Sigmoid colon (tissue), 7 donors: ENCODE measurements at regions of chr10 and their contacts with region 1.

Region 1: GRCh38 chr10:103244663-103245271 is 920 bp upstream of the RPEL1 start:
- DNase-seq: peak; percentile 88
- H3K4me3 ChIP-seq: no peak overlapping the region
- H3K27ac ChIP-seq: no peak overlapping the region
- H3K4me1 ChIP-seq: peaks cover 0 to 14% (median 11%) of the 10 kb centered on the region in 4 donors
- H3K27me3 ChIP-seq: no peaks in the 10 kb centered on the region
- CTCF ChIP-seq: peak; percentile 69 to 85 (median 78)
- EP300 ChIP-seq: no peak
- POLR2A ChIP-seq: no peak

Region 2: DNA sequence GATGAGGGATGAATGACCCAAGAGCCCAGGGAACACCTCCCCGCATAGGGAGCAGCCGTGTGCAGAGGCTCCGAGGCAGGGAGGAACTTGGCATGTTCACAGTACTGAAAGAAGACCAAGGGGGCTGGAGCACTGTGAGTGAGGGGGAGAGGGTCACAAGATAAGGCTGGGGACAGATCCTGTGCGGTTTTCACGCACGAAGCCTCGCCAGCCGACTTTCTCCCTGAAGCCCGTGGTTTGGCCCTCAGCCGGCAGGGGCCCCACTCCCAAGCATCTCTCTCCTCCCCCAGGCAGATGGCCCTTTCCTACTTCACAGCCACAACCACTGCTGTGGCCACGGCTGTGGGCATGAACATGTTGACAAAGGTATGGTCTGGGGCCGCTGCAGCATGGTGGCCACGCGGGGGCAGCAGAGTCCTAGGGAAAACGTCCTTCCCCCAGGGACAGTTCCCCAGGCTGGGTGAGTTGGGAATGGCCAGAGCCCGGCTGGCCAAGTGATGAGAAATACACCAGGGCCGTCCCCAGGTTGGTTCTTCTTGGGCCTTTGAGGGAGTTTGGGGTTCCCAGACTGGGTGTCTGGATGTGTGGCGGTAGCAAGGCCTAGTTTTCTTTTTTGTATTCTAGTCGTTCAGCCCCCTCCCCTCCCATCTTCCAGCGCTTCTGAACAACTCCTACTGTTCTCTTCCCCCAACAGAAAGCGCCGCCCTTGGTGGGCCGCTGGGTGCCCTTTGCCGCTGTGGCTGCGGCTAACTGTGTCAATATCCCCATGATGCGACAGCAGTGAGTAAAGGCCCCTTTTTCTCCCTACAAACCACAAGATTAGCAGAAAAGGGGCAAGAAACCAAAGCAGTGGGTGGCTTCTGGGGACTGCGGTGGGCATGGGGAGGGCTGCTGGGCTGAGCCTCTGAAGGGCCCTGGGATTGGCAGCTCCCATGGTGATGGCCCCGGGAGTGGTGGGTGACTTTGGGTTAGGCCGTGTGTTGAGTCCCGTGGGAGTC is 515.4 kb before region 1 on chr10:
- intact Hi-C with region 1: loop called (anchors 10 kb)
- DNase-seq: peak; percentile 94
- H3K4me3 ChIP-seq: no peak overlapping the region
- H3K27ac ChIP-seq: peak overlapping the region in 1 of 4 donors; percentile 2
- H3K4me1 ChIP-seq: peaks cover 0 to 11% (median 3%) of the 10 kb centered on the region in 4 donors
- H3K27me3 ChIP-seq: no peaks in the 10 kb centered on the region
- CTCF ChIP-seq: peak; percentile 89 to 92 (median 91)
- EP300 ChIP-seq: no peak
- POLR2A ChIP-seq: no peak

Region 3: DNA sequence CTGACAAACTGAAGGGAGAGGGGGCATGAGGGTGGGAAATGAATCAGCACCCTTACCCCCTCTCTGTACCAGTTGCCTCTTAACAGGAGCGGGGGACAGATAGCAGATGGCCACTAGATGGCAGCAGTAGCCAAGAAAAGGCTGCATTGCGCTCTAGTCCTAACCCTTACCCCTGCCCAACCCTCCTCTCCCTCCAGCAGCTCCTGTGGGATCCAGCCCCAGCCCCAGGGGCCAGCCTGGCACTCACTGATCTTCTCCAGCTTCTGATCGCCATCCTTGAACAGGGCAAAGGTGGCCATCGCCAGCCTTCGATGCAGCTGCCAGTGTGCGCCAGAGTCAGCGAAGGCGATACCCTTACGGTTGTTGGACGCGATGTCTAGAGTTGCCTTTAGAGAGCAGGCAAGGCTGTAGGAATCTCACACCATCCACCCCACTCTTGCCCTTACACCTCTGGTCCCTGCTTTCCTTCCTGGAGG is 409.7 kb before region 1 on chr10:
- intact Hi-C with region 1: loop called (anchors 10 kb)
- DNase-seq: peak; percentile 89
- H3K4me3 ChIP-seq: no peak overlapping the region
- H3K27ac ChIP-seq: no peak overlapping the region
- H3K4me1 ChIP-seq: peaks cover 0 to 8% (median 3%) of the 10 kb centered on the region in 4 donors
- H3K27me3 ChIP-seq: no peaks in the 10 kb centered on the region
- CTCF ChIP-seq: peak; percentile 66 to 89 (median 84)
- EP300 ChIP-seq: no peak
- POLR2A ChIP-seq: no peak

Region 4: DNA sequence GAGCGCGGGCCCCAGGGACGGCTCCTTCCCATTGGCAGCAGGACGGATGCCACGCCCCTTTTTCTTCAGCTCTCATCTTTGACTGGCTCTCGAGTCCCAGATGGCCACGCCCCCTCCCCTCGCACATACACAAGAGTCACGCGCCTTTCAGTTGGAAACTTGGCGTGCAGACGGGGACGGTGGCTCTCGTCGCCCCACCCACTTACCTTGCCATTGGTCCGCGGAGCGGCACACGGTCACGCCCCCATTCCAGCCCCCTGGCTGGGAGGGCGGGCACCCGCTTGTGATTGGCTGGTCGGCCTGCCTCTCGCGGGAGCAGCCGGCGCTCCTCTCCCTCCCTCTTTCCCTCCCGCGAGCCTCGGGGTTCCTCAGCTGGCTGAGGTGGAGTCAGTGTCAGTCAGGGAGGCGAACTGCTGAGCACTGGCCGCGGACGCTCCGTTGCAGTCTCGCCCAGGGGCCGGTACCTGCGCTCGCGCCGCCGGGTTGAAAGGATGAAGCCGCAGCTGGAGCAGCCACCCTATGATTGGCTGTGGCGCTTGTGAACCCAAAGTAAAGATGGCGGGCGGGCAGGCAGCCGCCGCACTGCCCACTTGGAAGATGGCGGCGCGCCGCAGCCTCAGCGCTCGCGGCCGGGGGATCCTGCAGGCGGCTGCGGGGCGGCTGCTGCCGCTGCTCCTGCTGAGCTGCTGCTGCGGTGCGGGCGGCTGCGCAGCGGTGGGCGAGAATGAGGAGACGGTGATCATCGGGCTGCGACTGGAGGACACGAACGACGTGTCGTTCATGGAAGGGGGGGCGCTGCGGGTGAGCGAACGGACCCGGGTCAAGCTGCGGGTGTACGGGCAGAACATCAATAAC is 326.6 kb before region 1 on chr10 and contains the start of gene CNNM2:
- intact Hi-C with region 1: loop called (anchors 1 kb)
- DNase-seq: peak; percentile 100
- H3K4me3 ChIP-seq: peak within 1 kb of the TSS; percentile 62 to 97 (median 80)
- H3K27ac ChIP-seq: peak within 1 kb of the TSS; percentile 82 to 95 (median 92)
- H3K4me1 ChIP-seq: peaks cover 0 to 46% (median 37%) of the 10 kb centered on the region in 4 donors
- H3K27me3 ChIP-seq: no peaks in the 10 kb centered on the region
- CTCF ChIP-seq: no peak
- EP300 ChIP-seq: no peak
- POLR2A ChIP-seq: peak in 1 of 2 donors; percentile 58
- total RNA-seq, gene CNNM2: 3.6 to 11.1 (median 6.0) TPM

Region 5: DNA sequence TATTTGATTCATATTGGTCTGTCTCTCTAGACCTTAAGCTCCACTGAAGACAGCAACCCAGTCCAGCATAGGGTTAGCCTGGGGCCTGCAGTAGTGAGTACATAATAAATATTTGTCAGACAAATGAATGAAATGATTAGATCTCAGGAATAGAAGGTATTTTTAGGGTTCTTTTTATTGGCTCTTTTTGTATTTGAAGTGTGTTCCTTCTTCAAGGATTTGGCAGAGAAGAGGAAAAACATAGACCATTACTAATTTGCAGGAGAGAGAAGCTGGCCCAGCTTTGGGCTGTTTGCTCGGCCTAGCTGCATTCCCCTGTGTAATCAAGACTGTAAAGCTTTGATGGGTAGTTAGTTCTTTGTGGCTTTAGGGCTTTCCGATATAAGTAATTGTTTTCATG is 262.5 kb before region 1 on chr10:
- intact Hi-C with region 1: no loop called
- DNase-seq: no peak
- H3K4me3 ChIP-seq: no peak overlapping the region
- H3K27ac ChIP-seq: no peak overlapping the region
- H3K4me1 ChIP-seq: no peaks in the 10 kb centered on the region
- H3K27me3 ChIP-seq: no peaks in the 10 kb centered on the region
- CTCF ChIP-seq: no peak
- EP300 ChIP-seq: no peak
- POLR2A ChIP-seq: no peak

Region 6: GRCh38 chr10:103013416-103013815 is 231.4 kb before region 1 on chr10:
- intact Hi-C with region 1: no loop called
- DNase-seq: no peak
- H3K4me3 ChIP-seq: no peak overlapping the region
- H3K27ac ChIP-seq: no peak overlapping the region
- H3K4me1 ChIP-seq: no peaks in the 10 kb centered on the region
- H3K27me3 ChIP-seq: no peaks in the 10 kb centered on the region
- CTCF ChIP-seq: no peak
- EP300 ChIP-seq: no peak
- POLR2A ChIP-seq: no peak

Region 7: DNA sequence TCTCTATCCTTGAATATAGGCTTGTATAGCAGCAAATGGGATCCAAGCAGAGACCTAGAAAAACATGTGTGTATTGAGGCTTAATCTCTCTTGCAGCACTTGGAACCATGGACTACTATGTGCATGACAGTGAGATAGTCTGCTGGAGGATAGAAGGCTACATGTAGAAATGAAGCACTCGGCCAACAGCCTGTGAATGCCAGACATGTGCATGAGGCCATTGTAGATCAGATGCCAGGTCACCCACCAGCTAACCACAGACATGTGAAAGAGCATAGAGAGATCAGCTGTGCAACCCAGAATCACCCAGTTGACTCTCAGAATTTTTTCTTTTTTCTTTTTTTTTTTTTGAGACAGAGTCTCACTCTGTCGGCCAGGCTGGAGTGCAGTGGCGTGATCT is 142.6 kb before region 1 on chr10:
- intact Hi-C with region 1: loop called (anchors 10 kb)
- DNase-seq: no peak
- H3K4me3 ChIP-seq: no peak overlapping the region
- H3K27ac ChIP-seq: no peak overlapping the region
- H3K4me1 ChIP-seq: peaks cover 0 to 10% (median 0%) of the 10 kb centered on the region in 4 donors
- H3K27me3 ChIP-seq: no peaks in the 10 kb centered on the region
- CTCF ChIP-seq: no peak
- EP300 ChIP-seq: no peak
- POLR2A ChIP-seq: no peak

Region 8: GRCh38 chr10:103192451-103193106 is 52.2 kb before region 1 on chr10:
- intact Hi-C with region 1: loop called (anchors 5 kb)
- DNase-seq: peak; percentile 91
- H3K4me3 ChIP-seq: peak overlapping the region; percentile 85 to 98 (median 96)
- H3K27ac ChIP-seq: peak overlapping the region; percentile 97 to 98 (median 97)
- H3K4me1 ChIP-seq: peaks cover 0 to 46% (median 41%) of the 10 kb centered on the region in 4 donors
- H3K27me3 ChIP-seq: no peaks in the 10 kb centered on the region
- CTCF ChIP-seq: no peak
- EP300 ChIP-seq: no peak
- POLR2A ChIP-seq: peak; percentile 12 to 43

Region 9: GRCh38 chr10:103316087-103316486 is 71.3 kb after region 1 on chr10:
- intact Hi-C with region 1: no loop called
- DNase-seq: no peak
- H3K4me3 ChIP-seq: no peak overlapping the region
- H3K27ac ChIP-seq: no peak overlapping the region
- H3K4me1 ChIP-seq: no peaks in the 10 kb centered on the region
- H3K27me3 ChIP-seq: no peaks in the 10 kb centered on the region
- CTCF ChIP-seq: no peak
- EP300 ChIP-seq: no peak
- POLR2A ChIP-seq: no peak